Dendritic cell treated with granulocyte-macrophage colony-stimulating factor and Interleukin-4, amounts not matched to agents 40 ng/mL and 50 ng/mL, for 4 days (primary cell): ENCODE measurements at regions of chr7 and their contacts with region 1.

Region 1: GRCh38 chr7:18430810-18431209 is 64.7 kb upstream of the HDAC9 start:
- H3K4me3 Mint-ChIP-seq: no peak overlapping the region
- H3K27ac Mint-ChIP-seq: peak overlapping the region; percentile 1
- H3K4me1 Mint-ChIP-seq: peaks cover 34% of the 10 kb centered on the region
- H3K27me3 Mint-ChIP-seq: no peaks in the 10 kb centered on the region

Region 2: DNA sequence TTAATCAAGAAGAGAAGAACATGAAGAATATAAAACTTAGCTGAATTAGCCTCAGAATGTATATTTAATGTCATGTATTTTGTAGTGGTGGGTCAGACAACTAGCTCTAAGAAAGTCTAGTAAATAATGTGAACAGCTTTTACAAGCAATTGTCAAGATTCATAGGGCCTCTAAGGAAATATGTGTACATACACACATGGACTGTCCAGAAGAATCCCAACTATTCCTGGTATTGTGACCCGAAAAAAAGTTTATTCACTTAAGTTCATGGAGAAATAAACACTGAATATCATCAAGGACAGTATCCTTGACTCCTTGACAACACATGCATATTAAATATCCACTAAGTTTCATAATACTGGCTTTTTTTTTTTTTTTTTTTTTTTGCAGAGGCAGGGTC is 698.0 kb after region 1 on chr7:
- intact Hi-C with region 1: loop called (anchors 5 kb)
- H3K4me3 Mint-ChIP-seq: no peak overlapping the region
- H3K27ac Mint-ChIP-seq: no peak overlapping the region
- H3K4me1 Mint-ChIP-seq: no peaks in the 10 kb centered on the region
- H3K27me3 Mint-ChIP-seq: peaks cover 7% of the 10 kb centered on the region